Activated B cell treated with CpG ODN at 0.5 μM for 24 hours (primary cell): ENCODE measurements at regions of chr16 and their contacts with region 1.

Region 1: GRCh38 chr16:81885976-81886586 is 107.0 kb downstream of the PLCG2 start:
- DNase-seq: no peak
- ATAC-seq: peak; percentile 81
- H3K4me3 Mint-ChIP-seq: no peak overlapping the region
- H3K27ac Mint-ChIP-seq: no peak overlapping the region
- H3K4me1 Mint-ChIP-seq: no peaks in the 10 kb centered on the region
- H3K27me3 Mint-ChIP-seq: no peaks in the 10 kb centered on the region
- CTCF ChIP-seq: peak; percentile 46

Region 2: GRCh38 chr16:81366316-81366932 is 519.7 kb before region 1 on chr16:
- CTCF ChIA-PET with region 1: interaction called, 7 read pairs
- POLR2A ChIA-PET with region 1: no interaction called
- intact Hi-C with region 1: loop called (anchors 1 kb)
- DNase-seq: no peak
- ATAC-seq: peak; percentile 82
- H3K4me3 Mint-ChIP-seq: no peak overlapping the region
- H3K27ac Mint-ChIP-seq: no peak overlapping the region
- H3K4me1 Mint-ChIP-seq: no peaks in the 10 kb centered on the region
- H3K27me3 Mint-ChIP-seq: no peaks in the 10 kb centered on the region
- CTCF ChIP-seq: no peak

Region 3: GRCh38 chr16:81908466-81909227 is 22.6 kb after region 1 on chr16:
- CTCF ChIA-PET with region 1: no interaction called
- POLR2A ChIA-PET with region 1: no interaction called
- intact Hi-C with region 1: no loop called
- DNase-seq: no peak
- ATAC-seq: no peak
- H3K4me3 Mint-ChIP-seq: no peak overlapping the region
- H3K27ac Mint-ChIP-seq: no peak overlapping the region
- H3K4me1 Mint-ChIP-seq: no peaks in the 10 kb centered on the region
- H3K27me3 Mint-ChIP-seq: no peaks in the 10 kb centered on the region
- CTCF ChIP-seq: no peak

Region 4: GRCh38 chr16:81921085-81921814 is 35.2 kb after region 1 on chr16:
- CTCF ChIA-PET with region 1: no interaction called
- POLR2A ChIA-PET with region 1: no interaction called
- intact Hi-C with region 1: loop called (anchors 1 kb)
- DNase-seq: no peak
- ATAC-seq: no peak
- H3K4me3 Mint-ChIP-seq: no peak overlapping the region
- H3K27ac Mint-ChIP-seq: no peak overlapping the region
- H3K4me1 Mint-ChIP-seq: peaks cover 18% of the 10 kb centered on the region
- H3K27me3 Mint-ChIP-seq: no peaks in the 10 kb centered on the region
- CTCF ChIP-seq: no peak

Region 5: GRCh38 chr16:81996664-81997622 is 110.9 kb after region 1 on chr16:
- CTCF ChIA-PET with region 1: no interaction called
- POLR2A ChIA-PET with region 1: no interaction called
- intact Hi-C with region 1: no loop called
- DNase-seq: no peak
- ATAC-seq: no peak
- H3K4me3 Mint-ChIP-seq: no peak overlapping the region
- H3K27ac Mint-ChIP-seq: no peak overlapping the region
- H3K4me1 Mint-ChIP-seq: no peaks in the 10 kb centered on the region
- H3K27me3 Mint-ChIP-seq: no peaks in the 10 kb centered on the region
- CTCF ChIP-seq: no peak

Region 6: GRCh38 chr16:82229796-82230619 is 343.9 kb after region 1 on chr16:
- CTCF ChIA-PET with region 1: interaction called, 3 read pairs
- POLR2A ChIA-PET with region 1: no interaction called
- intact Hi-C with region 1: loop called (anchors 1 kb)
- DNase-seq: peak; percentile 17
- ATAC-seq: no peak
- H3K4me3 Mint-ChIP-seq: no peak overlapping the region
- H3K27ac Mint-ChIP-seq: no peak overlapping the region
- H3K4me1 Mint-ChIP-seq: no peaks in the 10 kb centered on the region
- H3K27me3 Mint-ChIP-seq: peaks cover 18% of the 10 kb centered on the region
- CTCF ChIP-seq: peak; percentile 69